Prostate gland (tissue), 2 donors: ENCODE measurements at regions of chr10 and their contacts with region 1.

Region 1: DNA sequence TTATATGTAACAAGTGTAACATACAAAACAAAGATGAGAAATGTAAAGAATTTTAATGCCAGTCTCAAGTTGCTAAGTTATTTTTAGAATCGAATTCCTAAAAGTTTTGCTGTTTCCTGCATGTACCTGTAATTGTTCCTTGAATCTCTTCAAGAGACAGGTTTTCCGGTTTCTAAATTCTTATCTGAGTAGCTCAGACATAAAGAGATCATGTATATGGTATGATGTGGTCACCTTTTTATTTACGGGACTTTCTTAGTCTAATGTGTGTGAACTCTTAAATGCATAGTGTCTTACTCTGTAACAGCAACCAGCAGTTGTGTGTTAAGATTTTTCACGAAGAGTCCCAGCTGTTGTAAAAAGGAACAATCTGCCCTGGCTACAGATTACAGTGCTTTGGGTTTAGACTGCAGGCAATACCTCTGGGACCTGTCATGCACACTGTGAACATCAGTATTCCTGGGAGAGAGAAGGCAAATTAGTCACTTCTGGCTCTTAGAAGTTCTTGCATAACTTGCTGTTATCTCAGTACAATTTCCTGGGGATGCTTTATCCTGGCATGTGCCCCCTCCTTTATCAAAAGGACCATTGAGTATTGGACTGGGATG is 263.4 kb downstream of the BICC1 start:
- DNase-seq: no peak
- H3K4me3 ChIP-seq: no peak overlapping the region
- H3K27ac ChIP-seq: no peak overlapping the region
- H3K4me1 ChIP-seq: no peaks in the 10 kb centered on the region
- H3K27me3 ChIP-seq: no peaks in the 10 kb centered on the region
- CTCF ChIP-seq: no peak
- POLR2A ChIP-seq: no peak

Region 2: DNA sequence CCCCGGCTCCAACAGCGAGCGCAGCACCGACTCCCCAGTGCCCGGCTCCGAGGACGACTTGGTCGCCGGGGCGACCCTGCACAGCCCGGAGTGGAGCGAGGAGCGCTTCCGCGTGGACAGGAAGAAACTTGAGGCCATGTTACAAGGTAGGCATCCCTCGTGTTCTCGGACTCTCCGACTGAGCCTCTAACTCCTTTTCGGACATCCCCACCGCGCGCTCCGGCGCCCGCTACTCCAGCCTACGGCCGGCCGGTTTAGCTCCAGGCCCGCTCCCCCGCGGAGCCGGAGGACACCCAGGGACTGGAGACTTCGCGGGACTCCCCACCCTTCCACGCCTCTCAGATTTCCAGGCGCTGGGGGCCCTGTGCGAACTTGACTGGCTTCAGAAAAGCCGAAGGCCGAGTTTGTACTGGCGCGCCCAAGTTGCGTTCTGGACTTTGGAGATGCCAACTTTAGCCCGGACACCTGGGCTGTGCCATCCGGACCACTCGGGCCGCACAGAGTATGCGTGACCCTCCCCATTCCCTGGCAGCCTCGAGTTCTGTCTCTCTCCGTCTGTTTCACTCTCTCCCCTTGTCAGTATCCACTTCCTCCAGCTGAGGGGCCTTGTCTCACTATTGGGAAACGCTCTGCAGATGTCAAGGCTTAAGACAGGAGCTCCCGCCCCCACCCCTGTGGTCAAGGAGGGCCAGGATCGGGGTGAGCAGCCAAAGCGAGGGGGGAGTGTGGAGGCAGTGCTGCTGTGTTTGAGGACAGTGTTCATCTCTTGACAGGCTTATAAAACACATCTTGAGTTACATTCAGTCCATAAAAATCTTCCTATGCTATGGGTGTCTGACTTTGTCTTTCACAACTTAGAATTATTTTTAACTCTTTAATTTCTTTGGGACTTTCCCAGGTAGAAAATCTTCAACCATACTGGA is 262.6 kb before region 1 on chr10:
- intact Hi-C with region 1: loop called (anchors 10 kb)
- DNase-seq: peak; percentile 22
- H3K4me3 ChIP-seq: peak overlapping the region; percentile 55 to 68
- H3K27ac ChIP-seq: peak overlapping the region; percentile 73 to 77
- H3K4me1 ChIP-seq: no peaks in the 10 kb centered on the region
- H3K27me3 ChIP-seq: no peaks in the 10 kb centered on the region
- CTCF ChIP-seq: no peak
- POLR2A ChIP-seq: no peak